Heart right ventricle (tissue), 16 donors: ENCODE measurements at regions of chr18 and their contacts with region 1.

Region 1: DNA sequence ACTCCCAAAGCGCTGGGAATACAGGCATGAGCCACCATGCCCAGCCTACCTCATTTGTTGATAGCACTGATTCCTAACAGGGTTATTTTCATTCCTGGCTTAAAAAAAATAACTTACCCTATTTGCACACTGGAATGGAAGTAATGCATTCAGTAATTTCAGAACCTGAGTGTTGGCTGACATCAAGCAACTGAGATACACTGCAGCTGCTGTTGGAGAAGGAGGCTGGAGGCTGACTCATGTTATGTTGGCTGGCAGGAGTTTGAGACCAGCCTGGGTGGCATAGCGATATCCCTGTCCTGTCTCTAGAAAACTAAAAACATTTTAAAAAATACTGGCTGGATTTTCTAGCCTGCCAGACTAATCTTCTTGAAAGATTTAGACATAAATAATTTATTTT is 385.1 kb upstream of the MEX3C start:
- DNase-seq: no peak
- ATAC-seq: no peak
- H3K4me3 ChIP-seq: no peak overlapping the region
- H3K27ac ChIP-seq: no peak overlapping the region
- H3K4me1 ChIP-seq: no peaks in the 10 kb centered on the region
- H3K27me3 ChIP-seq: no peaks in the 10 kb centered on the region
- CTCF ChIP-seq: no peak

Region 2: GRCh38 chr18:51643483-51643882 is 60.9 kb after region 1 on chr18:
- intact Hi-C with region 1: loop called in 1 of 10 experiments (anchors 10 kb)
- DNase-seq: no peak
- ATAC-seq: no peak
- H3K4me3 ChIP-seq: no peak overlapping the region
- H3K27ac ChIP-seq: no peak overlapping the region
- H3K4me1 ChIP-seq: no peaks in the 10 kb centered on the region
- H3K27me3 ChIP-seq: peaks cover 0 to 4% (median 0%) of the 10 kb centered on the region in 7 donors
- CTCF ChIP-seq: no peak